AG04449 (cell line): ENCODE measurements at regions of chr2 and their contacts with region 1.

Region 1: DNA sequence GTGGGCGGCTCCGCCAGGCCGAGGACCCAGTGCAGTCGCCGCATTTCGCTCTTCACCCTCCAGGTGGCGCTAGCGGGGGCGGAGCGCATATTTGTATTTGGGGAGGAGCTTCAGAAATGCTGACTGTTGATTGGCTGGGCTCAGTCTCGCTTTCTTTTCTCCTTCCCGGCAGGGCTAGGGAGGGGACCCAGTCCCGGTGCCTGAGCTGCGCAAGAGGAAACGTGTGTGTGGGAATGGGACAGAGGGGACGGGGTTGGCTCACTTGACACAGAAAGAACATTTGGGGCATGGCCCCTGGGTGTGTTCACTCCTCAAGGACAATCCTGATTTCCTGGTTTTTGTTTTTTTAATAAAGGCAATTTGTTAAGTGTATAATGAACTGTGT is 20.3 kb upstream of the DNMT3A start:
- DNase-seq: peak; percentile 31
- H3K4me3 ChIP-seq: peak overlapping the region; percentile 44
- CTCF ChIP-seq: peak; percentile 95

Region 2: DNA sequence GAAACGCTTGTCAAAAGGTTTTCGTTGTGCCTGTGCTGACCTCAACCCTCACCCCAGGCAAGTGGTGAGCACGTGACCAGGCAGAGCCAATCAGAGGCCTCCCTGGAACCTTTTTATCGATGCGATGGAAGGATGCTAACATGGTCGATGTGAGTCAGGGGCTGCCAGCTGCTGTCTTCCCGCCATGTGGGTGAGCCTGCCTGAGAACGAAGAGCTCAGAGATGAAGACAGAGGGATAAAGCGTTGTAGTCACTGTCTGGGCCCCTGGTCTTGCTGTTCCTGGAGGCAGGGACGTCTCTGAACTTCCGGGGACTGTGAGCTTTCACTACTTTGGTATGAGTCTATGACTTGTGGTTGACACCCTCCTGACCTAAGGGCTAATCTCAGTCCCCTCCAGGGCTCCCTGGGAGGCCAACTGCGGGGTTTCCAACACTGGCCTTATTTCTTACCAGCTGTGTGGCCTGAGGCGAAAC is 39.0 kb before region 1 on chr2:
- CTCF ChIA-PET with region 1: interaction called, 14 read pairs
- POLR2A ChIA-PET with region 1: no interaction called
- DNase-seq: no peak
- H3K4me3 ChIP-seq: no peak overlapping the region
- CTCF ChIP-seq: no peak

Region 3: DNA sequence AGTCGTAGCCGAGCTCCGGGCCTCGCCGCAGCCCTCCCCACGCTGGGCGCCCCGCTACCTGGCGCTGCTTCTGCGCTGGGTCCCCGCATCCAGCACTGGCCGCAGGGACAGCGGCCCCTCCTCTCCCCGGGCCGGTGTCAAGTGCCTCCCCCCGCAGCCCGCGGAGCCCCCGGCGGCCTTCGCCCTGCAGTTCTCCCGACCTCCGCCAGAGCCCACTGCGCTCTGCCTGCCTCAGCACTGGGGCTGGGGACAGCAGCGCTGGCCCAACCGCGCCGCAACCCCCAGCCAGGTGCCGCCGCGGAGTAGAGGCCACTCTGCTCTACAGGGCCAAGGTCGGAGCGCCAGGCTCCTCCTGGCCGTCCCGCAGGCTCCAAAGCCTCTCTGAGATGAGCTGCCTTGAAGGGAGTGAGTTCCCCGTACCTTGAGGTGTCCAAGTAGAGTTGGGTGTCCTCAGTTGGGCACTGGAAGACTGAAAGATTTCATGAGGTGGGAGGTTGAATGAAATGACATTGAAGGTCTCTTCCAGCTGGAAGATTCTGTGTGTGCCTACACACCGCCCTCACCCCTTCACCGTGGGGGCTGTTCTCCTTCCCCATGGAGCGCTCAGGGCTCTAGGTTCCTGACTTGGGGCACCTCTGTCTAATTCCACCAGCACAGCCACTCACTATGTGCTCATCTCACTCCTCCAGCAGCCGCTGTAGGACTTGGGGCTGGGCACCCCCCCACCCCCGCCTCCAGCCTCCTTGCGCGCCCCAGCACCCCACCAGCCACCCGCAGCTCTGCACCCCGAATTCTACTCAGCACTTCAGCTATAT is 19.5 kb before region 1 on chr2:
- CTCF ChIA-PET with region 1: interaction called, 107 read pairs
- POLR2A ChIA-PET with region 1: no interaction called
- DNase-seq: no peak
- H3K4me3 ChIP-seq: peak overlapping the region; percentile 64
- CTCF ChIP-seq: peak; percentile 98

Region 4: GRCh38 chr2:25376750-25377621 is 14.9 kb after region 1 on chr2:
- CTCF ChIA-PET with region 1: interaction called, 184 read pairs
- POLR2A ChIA-PET with region 1: no interaction called
- DNase-seq: no peak
- H3K4me3 ChIP-seq: peak overlapping the region; percentile 42
- CTCF ChIP-seq: peak; percentile 89

Region 5: DNA sequence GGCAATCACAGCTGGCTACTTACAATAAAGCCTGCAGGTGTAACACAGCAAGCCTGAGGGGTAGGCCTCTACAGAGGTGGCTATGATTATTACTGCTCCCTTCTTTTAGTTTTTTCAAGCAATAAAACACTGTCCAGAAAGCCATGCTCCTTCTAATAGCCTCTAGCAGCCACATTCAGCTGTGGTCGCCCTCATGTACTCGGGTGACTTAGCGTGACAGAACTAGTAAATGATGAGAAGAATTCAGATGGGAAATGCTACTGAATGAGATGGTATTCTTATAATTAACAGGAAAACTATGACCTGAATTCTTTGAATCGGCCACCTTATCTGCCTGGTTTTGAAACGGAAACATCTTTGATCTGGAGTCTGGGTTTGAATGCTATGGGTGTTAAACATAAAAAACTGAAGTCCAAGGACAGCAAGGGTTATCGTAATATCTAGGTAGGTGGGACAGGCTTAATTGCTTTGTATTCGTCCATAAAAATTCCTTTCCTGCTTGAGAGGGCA is 118.5 kb after region 1 on chr2:
- CTCF ChIA-PET with region 1: interaction called, 13 read pairs
- POLR2A ChIA-PET with region 1: no interaction called
- DNase-seq: no peak
- H3K4me3 ChIP-seq: no peak overlapping the region
- CTCF ChIP-seq: no peak

Region 6: GRCh38 chr2:25567406-25567805 is 205.4 kb after region 1 on chr2:
- CTCF ChIA-PET with region 1: interaction called, 24 read pairs
- POLR2A ChIA-PET with region 1: no interaction called
- DNase-seq: no peak
- H3K4me3 ChIP-seq: no peak overlapping the region
- CTCF ChIP-seq: peak; percentile 30